ENCODE measurements at regions of chr13 and their contacts with region 1.

Region 1: GRCh38 chr13:76473552-76474134 is 412.6 kb downstream of the KCTD12 start:
- DNase-seq: peak; percentile 57 to 67
- ATAC-seq: peak; percentile 91 to 99 (median 98)
- H3K4me3 ChIP-seq: no peak overlapping the region
- H3K27ac ChIP-seq: no peak overlapping the region
- H3K4me1 ChIP-seq: peaks cover 5% of the 10 kb centered on the region
- H3K27me3 ChIP-seq: no peaks in the 10 kb centered on the region
- CTCF ChIP-seq: peak; percentile 93

Region 2: GRCh38 chr13:75687150-75687763 is 786.4 kb before region 1 on chr13:
- intact Hi-C with region 1: loop called in 1 of 2 experiments (anchors 10 kb)
- DNase-seq: no peak
- ATAC-seq: peak in 1 of 4 donors; percentile 50
- H3K4me3 ChIP-seq: no peak overlapping the region
- H3K27ac ChIP-seq: no peak overlapping the region
- H3K4me1 ChIP-seq: no peaks in the 10 kb centered on the region
- H3K27me3 ChIP-seq: no peaks in the 10 kb centered on the region
- CTCF ChIP-seq: peak; percentile 58

Region 3: GRCh38 chr13:75876360-75877050 is 597.1 kb before region 1 on chr13:
- intact Hi-C with region 1: loop called (anchors 1 to 2 kb)
- DNase-seq: peak in 1 of 2 donors; percentile 27
- ATAC-seq: peak; percentile 68 to 94 (median 84)
- H3K4me3 ChIP-seq: no peak overlapping the region
- H3K27ac ChIP-seq: no peak overlapping the region
- H3K4me1 ChIP-seq: peaks cover 3% of the 10 kb centered on the region
- H3K27me3 ChIP-seq: no peaks in the 10 kb centered on the region
- CTCF ChIP-seq: peak; percentile 96

Region 4: DNA sequence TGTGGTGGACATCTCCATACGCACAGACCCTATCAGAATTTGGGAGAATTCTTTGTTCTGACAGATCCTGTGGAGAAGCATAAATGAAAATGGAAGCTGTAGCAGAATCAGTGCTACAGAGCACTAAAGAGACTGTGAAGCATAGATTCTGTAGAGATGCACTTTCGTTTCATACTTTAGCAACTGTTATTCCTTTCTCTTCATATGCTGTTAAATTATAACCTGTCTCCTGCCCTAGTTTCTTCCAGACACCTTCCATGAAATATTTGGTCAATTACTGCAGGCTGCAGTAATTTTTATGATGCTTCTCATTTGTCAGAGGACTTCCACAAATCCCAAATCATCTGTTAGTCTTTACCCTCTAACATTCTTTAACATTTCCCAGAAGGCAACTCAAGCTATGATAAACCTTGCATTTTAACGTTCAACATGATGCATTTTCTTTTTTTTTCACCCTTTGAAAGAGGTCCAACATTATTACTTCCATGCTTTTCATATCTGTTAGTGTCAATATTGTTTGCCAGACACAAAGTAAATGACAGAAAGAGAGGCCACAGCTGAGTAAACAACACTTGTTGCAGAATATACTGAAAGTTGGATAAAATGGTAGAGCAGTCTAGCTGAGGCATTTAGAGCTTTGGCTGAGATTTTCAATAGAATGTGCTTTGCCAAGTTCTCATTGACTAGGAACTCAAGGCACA is 424.8 kb before region 1 on chr13:
- intact Hi-C with region 1: loop called in 1 of 2 experiments (anchors 10 kb)
- DNase-seq: no peak
- ATAC-seq: no peak
- H3K4me3 ChIP-seq: no peak overlapping the region
- H3K27ac ChIP-seq: no peak overlapping the region
- H3K4me1 ChIP-seq: no peaks in the 10 kb centered on the region
- H3K27me3 ChIP-seq: no peaks in the 10 kb centered on the region
- CTCF ChIP-seq: no peak

Region 5: GRCh38 chr13:76533251-76533650 is 59.6 kb after region 1 on chr13:
- intact Hi-C with region 1: no loop called
- DNase-seq: no peak
- ATAC-seq: no peak
- H3K4me3 ChIP-seq: no peak overlapping the region
- H3K27ac ChIP-seq: no peak overlapping the region
- H3K4me1 ChIP-seq: no peaks in the 10 kb centered on the region
- H3K27me3 ChIP-seq: no peaks in the 10 kb centered on the region
- CTCF ChIP-seq: no peak

Region 6: GRCh38 chr13:76903544-76904162 is 430.0 kb after region 1 on chr13:
- intact Hi-C with region 1: loop called (anchors 5 to 10 kb)
- DNase-seq: peak in 1 of 2 donors; percentile 39
- ATAC-seq: peak; percentile 64 to 85 (median 72)
- H3K4me3 ChIP-seq: no peak overlapping the region
- H3K27ac ChIP-seq: no peak overlapping the region
- H3K4me1 ChIP-seq: no peaks in the 10 kb centered on the region
- H3K27me3 ChIP-seq: no peaks in the 10 kb centered on the region
- CTCF ChIP-seq: peak; percentile 99